HCT116 (cell line): ENCODE measurements at regions of chrX and their contacts with region 1.

Region 1: GRCh38 chrX:72540318-72540717 is 32.3 kb downstream of the HDAC8 start:
- DNase-seq: no peak
- ATAC-seq: no peak
- H3K4me3 ChIP-seq: no peak overlapping the region
- H3K27ac ChIP-seq: no peak overlapping the region
- H3K4me1 ChIP-seq: no peaks in the 10 kb centered on the region
- H3K27me3 ChIP-seq: no peaks in the 10 kb centered on the region
- CTCF ChIP-seq: peak in 2 of 3 experiments; percentile 17 to 31; a peak in 3 of 6 replicates
- POLR2A ChIP-seq: no peak
- RAD21 ChIP-seq: peak; percentile 51

Region 2: GRCh38 chrX:72245461-72246089 is 294.7 kb before region 1 on chrX:
- CTCF ChIA-PET with region 1: interaction called, 6 read pairs
- POLR2A ChIA-PET with region 1: no interaction called
- RAD21 ChIA-PET with region 1: interaction called in 1 of 2 experiments, 3 read pairs
- intact Hi-C with region 1: loop called (anchors 1 kb)
- DNase-seq: peak; percentile 13
- ATAC-seq: peak; percentile 90
- H3K4me3 ChIP-seq: no peak overlapping the region
- H3K27ac ChIP-seq: no peak overlapping the region
- H3K4me1 ChIP-seq: peaks cover 0 to 9% of the 10 kb centered on the region in 2 experiments; a peak in 3 of 4 replicates
- H3K27me3 ChIP-seq: no peaks in the 10 kb centered on the region
- CTCF ChIP-seq: peak; percentile 56 to 65 (median 61); a peak in 5 of 6 replicates
- POLR2A ChIP-seq: no peak
- RAD21 ChIP-seq: peak; percentile 79

Region 3: DNA sequence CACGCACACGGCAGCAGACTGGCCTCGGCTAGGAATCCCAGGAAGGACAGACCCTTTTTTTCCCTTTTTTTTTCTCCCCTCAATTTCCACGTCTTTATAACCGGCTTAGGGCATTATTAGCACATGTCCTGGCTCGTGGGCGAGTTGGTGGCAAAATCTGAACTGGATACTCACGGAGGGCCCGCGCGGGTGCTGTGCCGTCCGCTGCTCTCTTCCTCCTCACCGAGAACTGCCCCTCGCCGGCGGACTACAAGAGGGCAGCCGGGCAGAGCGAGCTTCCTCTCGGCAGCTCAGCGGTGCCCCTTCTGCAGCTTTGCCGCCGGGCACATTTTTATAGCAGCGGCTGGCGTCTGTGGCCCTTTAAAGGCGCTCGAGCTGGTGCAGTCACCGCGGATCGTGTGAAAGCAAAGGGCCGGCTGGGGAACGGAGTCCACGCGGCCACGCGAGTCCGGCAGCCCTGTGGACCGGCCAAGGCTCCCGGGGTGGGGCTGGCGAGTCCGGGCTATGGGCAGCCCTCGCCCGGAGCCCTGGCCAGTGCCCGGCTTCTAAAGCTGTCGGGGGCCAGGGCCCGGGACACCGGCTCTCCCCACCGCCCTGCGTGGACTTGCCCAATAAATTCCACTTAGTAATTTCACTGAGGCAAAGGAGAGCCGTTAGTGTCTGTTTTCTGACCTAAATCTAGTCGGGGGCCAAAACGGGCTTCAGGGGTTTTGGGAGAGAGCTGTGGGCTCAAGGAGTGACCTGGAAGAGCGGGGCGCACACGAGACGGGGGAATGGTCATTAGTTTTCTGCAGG is 233.3 kb before region 1 on chrX:
- CTCF ChIA-PET with region 1: no interaction called
- POLR2A ChIA-PET with region 1: no interaction called
- RAD21 ChIA-PET with region 1: no interaction called
- intact Hi-C with region 1: loop called (anchors 10 kb)
- DNase-seq: peak; percentile 22
- ATAC-seq: peak; percentile 66
- H3K4me3 ChIP-seq: peak overlapping the region; percentile 51 to 60
- H3K27ac ChIP-seq: no peak overlapping the region
- H3K4me1 ChIP-seq: peaks cover 2 to 22% of the 10 kb centered on the region in 2 experiments; a peak in 3 of 4 replicates
- H3K27me3 ChIP-seq: no peaks in the 10 kb centered on the region; the same call in 1 of the 2 replicates
- CTCF ChIP-seq: no peak
- POLR2A ChIP-seq: no peak
- RAD21 ChIP-seq: 0 out of 2 replicates have a peak, but pooled peaks have one; percentile 2

Region 4: GRCh38 chrX:72714476-72714916 is 174.2 kb after region 1 on chrX:
- CTCF ChIA-PET with region 1: no interaction called
- POLR2A ChIA-PET with region 1: no interaction called
- RAD21 ChIA-PET with region 1: no interaction called
- intact Hi-C with region 1: no loop called
- DNase-seq: peak; percentile 7
- ATAC-seq: peak; percentile 72
- H3K4me3 ChIP-seq: peak overlapping the region; percentile 51 to 59
- H3K27ac ChIP-seq: peak overlapping the region; percentile 72
- H3K4me1 ChIP-seq: peaks cover 0 to 12% of the 10 kb centered on the region in 2 experiments; a peak in 2 of 4 replicates
- H3K27me3 ChIP-seq: no peaks in the 10 kb centered on the region
- CTCF ChIP-seq: no peak
- POLR2A ChIP-seq: no peak
- RAD21 ChIP-seq: no peak